A673 (cell line): ENCODE measurements at regions of chr12 and their contacts with region 1.

Region 1: DNA sequence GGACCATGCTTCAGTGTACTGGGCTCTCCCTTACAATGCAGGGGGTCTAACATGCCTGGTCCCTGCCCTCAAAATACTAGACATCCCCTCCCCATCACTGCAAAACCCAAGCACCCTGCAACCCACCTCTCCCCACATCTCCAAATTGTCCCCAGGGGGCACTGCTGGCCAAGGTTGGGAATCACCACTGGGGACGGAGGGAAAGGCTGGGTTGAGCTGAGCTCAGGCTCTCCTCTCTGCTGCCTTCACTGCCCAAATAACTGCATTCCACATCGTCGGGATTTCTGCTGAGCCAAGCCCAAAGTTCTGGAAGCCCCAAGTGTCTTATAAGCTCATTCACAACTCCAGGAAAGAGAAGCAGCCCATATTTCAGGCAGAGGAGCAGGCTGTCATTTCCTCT is 69.6 kb downstream of the NT5DC3 start:
- DNase-seq: peak; percentile 47
- H3K4me3 ChIP-seq: no peak overlapping the region
- H3K27ac ChIP-seq: no peak overlapping the region
- H3K4me1 ChIP-seq: peaks cover 8% of the 10 kb centered on the region
- H3K27me3 ChIP-seq: no peaks in the 10 kb centered on the region
- CTCF ChIP-seq: peak; percentile 56

Region 2: GRCh38 chr12:103877934-103878510 is 106.6 kb after region 1 on chr12:
- CTCF ChIA-PET with region 1: no interaction called
- POLR2A ChIA-PET with region 1: no interaction called
- intact Hi-C with region 1: loop called (anchors 5 kb)
- DNase-seq: peak; percentile 84
- H3K4me3 ChIP-seq: no peak overlapping the region
- H3K27ac ChIP-seq: no peak overlapping the region
- H3K4me1 ChIP-seq: no peaks in the 10 kb centered on the region
- H3K27me3 ChIP-seq: no peaks in the 10 kb centered on the region
- CTCF ChIP-seq: peak; percentile 84